Gastrocnemius medialis (tissue), 4 donors: ENCODE measurements at regions of chr6 and their contacts with region 1.

Region 1: GRCh38 chr6:156866220-156867015 is 89.2 kb downstream of the ARID1B start:
- DNase-seq: peak; percentile 39 to 58
- ATAC-seq: peak; percentile 75 to 79
- H3K4me3 ChIP-seq: no peak overlapping the region
- H3K27ac ChIP-seq: peak overlapping the region in 2 of 4 donors; percentile 46 to 51
- H3K4me1 ChIP-seq: peaks cover 66 to 70% of the 10 kb centered on the region in 2 donors
- H3K27me3 ChIP-seq: no peaks in the 10 kb centered on the region
- CTCF ChIP-seq: peak in 1 of 5 experiments; percentile 11
- POLR2A ChIP-seq: no peak

Region 2: DNA sequence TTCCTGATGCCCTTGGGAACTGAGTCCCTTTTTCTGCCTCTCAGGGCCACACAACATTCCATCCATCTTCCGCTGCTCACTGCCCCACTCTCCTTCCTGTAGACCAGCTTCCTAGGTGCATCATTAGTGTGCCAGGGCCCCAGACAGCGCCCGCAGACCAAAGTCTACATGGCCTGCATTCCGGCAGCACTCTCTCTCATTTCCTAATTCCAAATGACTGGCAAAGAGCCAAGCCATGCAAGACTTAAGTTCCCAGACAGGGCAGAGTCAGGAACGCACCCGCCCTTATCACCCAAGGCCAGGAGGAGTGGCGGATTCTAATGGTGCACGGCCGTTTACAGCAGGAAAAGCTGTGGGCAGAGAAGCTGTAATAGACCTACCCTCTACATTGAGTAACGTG is 249.0 kb before region 1 on chr6:
- in situ Hi-C with region 1: no loop called
- intact Hi-C with region 1: no loop called
- DNase-seq: no peak
- ATAC-seq: no peak
- H3K4me3 ChIP-seq: no peak overlapping the region
- H3K27ac ChIP-seq: no peak overlapping the region
- H3K4me1 ChIP-seq: no peaks in the 10 kb centered on the region
- H3K27me3 ChIP-seq: no peaks in the 10 kb centered on the region
- CTCF ChIP-seq: no peak
- POLR2A ChIP-seq: no peak

Region 3: DNA sequence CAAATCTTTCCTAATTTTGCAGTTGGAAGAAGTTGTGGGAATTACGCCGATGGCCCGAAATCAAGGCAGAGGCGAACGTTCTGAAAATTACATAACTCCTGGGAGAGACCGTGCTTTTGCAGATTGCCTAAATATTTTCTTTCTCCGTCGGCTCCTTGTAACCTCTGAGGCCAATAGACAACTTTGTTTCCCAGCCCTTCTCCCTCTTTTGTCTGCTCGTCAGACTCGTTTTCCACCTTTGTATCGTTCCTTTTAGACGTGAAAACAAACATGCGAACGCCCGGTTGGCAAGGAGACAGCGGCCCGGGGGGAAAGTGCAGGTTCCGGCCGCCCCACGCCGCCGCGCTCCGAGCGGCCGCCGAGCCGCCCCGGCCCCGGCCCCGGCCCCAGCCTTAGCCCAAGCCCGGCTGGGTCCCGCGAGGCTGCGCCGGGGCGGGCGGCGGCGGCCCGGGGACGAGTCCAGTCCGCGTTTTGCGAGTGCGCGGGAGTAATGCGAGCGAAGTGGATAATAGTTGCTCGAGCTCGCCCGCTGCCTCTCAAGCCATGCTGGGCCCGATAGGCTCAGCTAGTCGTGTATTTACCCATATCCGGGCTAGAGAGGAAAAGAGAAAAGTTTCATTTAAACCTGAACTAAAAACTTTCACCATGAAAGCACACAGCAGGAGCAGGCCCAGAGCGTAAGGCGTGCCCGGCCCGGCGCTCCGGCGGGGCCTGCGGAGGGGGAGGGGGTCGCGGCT is 89.4 kb before region 1 on chr6 and contains the start of gene ARID1B:
- in situ Hi-C with region 1: no loop called
- intact Hi-C with region 1: no loop called
- DNase-seq: peak; percentile 74 to 84
- ATAC-seq: peak; percentile 45 to 55
- H3K4me3 ChIP-seq: peak within 1 kb of the TSS; percentile 76 to 89 (median 81)
- H3K27ac ChIP-seq: peak within 1 kb of the TSS; percentile 96 to 98 (median 98)
- H3K4me1 ChIP-seq: peaks cover 31 to 38% of the 10 kb centered on the region in 2 donors
- H3K27me3 ChIP-seq: no peaks in the 10 kb centered on the region
- CTCF ChIP-seq: no peak
- POLR2A ChIP-seq: peak; percentile 65 to 69
- total RNA-seq, gene ARID1B: 54.9 to 75.3 (median 62.0) TPM

Region 4: GRCh38 chr6:156852132-156852857 is 14.1 kb before region 1 on chr6:
- in situ Hi-C with region 1: no loop called
- intact Hi-C with region 1: loop called (anchors 1 kb)
- DNase-seq: peak in 1 of 2 donors; percentile 43
- ATAC-seq: peak; percentile 31 to 39
- H3K4me3 ChIP-seq: no peak overlapping the region
- H3K27ac ChIP-seq: peak overlapping the region; percentile 79 to 87 (median 84)
- H3K4me1 ChIP-seq: peaks cover 80 to 94% of the 10 kb centered on the region in 2 donors
- H3K27me3 ChIP-seq: no peaks in the 10 kb centered on the region
- CTCF ChIP-seq: no peak
- POLR2A ChIP-seq: no peak